Psoas muscle (tissue), 8 donors: ENCODE measurements at regions of chr16 and their contacts with region 1.

Region 1: DNA sequence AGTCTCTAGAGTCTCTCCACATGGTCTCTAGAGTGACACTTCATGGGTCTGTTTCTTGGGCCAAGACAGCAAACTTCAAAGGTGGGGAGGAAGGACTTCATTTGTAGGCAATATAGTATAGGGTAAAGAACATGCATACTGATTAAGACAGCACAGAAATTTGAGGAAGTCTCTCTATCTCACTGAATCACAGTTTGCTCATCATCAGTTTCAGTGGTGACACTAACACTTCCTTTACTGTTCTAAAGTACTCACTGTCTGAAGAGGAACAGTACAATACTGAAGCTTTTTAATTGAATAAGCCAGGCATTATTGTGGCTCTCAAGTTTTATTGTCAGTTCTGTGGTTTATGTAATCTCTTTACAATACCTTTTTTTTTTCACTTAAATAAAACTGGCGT is 656.4 kb upstream of the CDH8 start:
- DNase-seq: no peak
- ATAC-seq: no peak
- H3K4me3 ChIP-seq: no peak overlapping the region
- H3K27ac ChIP-seq: no peak overlapping the region
- H3K4me1 ChIP-seq: no peaks in the 10 kb centered on the region
- H3K27me3 ChIP-seq: no peaks in the 10 kb centered on the region
- CTCF ChIP-seq: no peak

Region 2: GRCh38 chr16:62475573-62475972 is 217.1 kb before region 1 on chr16:
- intact Hi-C with region 1: no loop called
- DNase-seq: no peak
- ATAC-seq: no peak
- H3K4me3 ChIP-seq: no peak overlapping the region
- H3K27ac ChIP-seq: no peak overlapping the region
- H3K4me1 ChIP-seq: no peaks in the 10 kb centered on the region
- H3K27me3 ChIP-seq: no peaks in the 10 kb centered on the region
- CTCF ChIP-seq: no peak

Region 3: DNA sequence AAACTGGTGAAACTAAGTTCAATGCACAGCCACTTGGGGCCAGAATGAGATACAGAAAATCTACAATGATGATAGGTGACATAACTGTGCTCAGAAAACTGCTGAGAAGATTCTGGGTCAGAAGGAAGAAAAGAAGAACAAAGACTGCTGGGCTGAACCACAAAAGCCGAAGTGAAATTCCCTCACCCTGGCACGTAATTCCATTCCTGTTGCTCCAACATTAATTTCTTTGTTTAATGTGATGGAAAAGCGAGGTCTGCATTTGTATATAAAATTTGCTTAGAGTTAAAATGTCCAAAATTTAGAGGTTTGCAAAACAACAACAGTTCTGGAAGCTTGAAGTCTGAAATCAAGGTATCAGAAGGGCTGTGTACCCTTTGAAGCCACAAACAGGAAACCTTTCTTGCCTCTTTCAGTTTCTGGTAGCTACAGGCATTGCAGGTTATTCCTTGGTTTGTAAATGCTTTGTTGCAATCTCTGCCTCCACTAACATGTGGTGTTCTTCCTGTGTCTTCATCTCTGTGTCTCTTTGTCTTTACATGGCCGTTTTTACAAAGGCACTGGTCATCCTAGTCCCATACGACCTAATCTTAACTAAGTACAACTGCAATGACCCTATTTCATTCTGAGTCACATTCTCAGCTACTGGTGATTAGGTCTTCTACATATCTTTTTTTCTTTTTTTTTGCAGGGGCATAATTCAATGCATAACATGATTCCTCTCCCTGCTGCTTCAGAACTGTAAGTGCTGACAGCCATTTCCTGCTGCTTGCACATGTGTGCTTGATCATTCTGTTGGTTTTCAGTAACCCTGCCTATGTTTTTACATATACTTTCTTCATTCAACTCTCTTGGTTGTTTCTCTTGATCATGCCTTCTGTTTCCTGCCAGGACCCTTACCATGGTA is 53.5 kb before region 1 on chr16:
- intact Hi-C with region 1: no loop called
- DNase-seq: no peak
- ATAC-seq: no peak
- H3K4me3 ChIP-seq: no peak overlapping the region
- H3K27ac ChIP-seq: no peak overlapping the region
- H3K4me1 ChIP-seq: no peaks in the 10 kb centered on the region
- H3K27me3 ChIP-seq: no peaks in the 10 kb centered on the region
- CTCF ChIP-seq: no peak

Region 4: DNA sequence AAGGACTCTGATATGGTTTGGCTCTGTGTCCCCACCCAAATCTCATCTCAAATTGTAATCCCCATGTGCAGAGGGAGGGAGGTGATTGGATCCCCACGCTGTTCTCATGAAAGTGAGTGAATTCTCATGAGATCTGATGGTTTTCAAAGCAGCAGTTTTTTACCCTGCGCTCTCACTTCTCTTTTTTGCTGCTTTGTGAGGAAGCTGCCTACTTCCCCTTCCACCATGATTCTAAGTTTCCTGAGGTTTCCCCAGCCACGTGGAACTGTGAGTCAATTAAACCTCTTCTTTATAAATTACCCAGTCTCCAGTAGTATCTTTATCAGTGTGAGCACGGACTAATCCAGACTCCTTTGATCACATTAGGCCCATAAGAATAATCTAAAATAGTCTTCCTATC is 63.3 kb after region 1 on chr16:
- intact Hi-C with region 1: loop called in 1 of 2 experiments (anchors 10 kb)
- DNase-seq: no peak
- ATAC-seq: no peak
- H3K4me3 ChIP-seq: no peak overlapping the region
- H3K27ac ChIP-seq: no peak overlapping the region
- H3K4me1 ChIP-seq: no peaks in the 10 kb centered on the region
- H3K27me3 ChIP-seq: no peaks in the 10 kb centered on the region
- CTCF ChIP-seq: no peak